ENCODE measurements at regions of chr15 and their contacts with region 1.

Region 1: DNA sequence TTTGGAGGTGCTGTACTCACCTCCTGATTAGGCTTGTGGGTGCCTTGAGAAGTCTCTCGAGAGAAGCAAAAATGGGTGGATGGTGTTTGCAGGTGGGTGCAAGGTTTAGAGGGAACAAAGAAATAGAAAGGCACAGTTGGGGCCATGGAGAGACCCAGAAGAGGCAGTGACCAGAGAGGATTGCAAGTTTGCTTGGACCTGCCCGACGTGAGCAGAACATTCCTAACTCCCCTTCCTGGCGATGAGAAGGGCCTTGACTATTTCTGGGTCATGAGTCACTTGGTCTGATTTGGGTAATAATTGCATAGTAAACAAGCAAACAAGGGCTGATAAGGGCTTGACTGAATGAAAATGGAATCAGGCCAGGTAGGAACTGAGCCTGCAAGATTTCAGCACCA is 7.0 kb upstream of the CTSH start:
- DNase-seq: no peak
- H3K4me3 ChIP-seq: no peak overlapping the region
- H3K27ac ChIP-seq: no peak overlapping the region
- H3K4me1 ChIP-seq: no peaks in the 10 kb centered on the region
- H3K27me3 ChIP-seq: no peaks in the 10 kb centered on the region
- CTCF ChIP-seq: no peak

Region 2: DNA sequence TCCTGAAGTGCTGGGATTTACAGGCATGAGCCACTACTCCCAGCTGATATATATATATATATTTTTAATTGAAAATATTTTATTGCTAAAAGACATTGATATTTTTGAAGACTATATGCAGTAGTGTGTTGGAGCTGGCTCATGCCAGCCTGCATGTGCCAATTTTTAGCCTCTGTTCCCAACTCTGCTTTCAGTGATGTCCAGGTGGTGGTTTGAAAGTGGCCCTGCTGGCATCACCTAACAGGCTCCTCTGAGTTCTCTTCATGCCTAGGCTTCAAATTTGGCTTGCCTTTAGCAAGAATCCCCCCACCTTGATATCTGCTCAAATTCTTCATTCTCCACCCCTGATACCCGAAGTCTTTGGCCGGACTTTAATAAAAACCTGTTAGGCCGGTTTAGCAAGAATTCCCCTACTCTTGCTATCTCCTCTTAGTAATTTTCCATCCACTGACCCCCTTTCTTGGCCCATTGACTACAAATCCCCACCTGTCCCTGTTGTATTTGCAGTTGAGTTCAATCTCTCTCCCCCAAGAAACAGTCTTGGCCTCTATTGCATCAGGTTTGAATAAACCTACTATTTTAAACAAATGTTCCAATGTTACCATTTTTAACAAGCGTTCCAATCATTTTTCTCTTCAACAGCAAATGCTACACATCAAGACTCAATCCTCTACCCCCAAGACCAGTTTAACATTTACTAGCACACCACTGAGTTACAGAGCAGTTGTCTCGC is 16.9 kb after region 1 on chr15:
- intact Hi-C with region 1: loop called (anchors 2 kb)
- DNase-seq: no peak
- H3K4me3 ChIP-seq: no peak overlapping the region
- H3K27ac ChIP-seq: peak overlapping the region; percentile 36 to 77
- H3K4me1 ChIP-seq: peaks cover 3 to 13% of the 10 kb centered on the region in 2 donors
- H3K27me3 ChIP-seq: no peaks in the 10 kb centered on the region
- CTCF ChIP-seq: no peak

Measured in ascending aorta (tissue), 2 donors.